HepG2 (cell line): ENCODE measurements at regions of chr18 and their contacts with region 1.

Region 1: GRCh38 chr18:52409727-52410126 is 69.7 kb downstream of the DCC start:
- DNase-seq: peak; percentile 12
- ATAC-seq: peak; percentile 85
- H3K4me3 ChIP-seq: 0 out of 6 replicates have a peak overlapping the region, but pooled peaks of 1 of the 3 experiments have one; percentile 7
- H3K27ac ChIP-seq: no peak overlapping the region
- H3K4me1 ChIP-seq: no peaks in the 10 kb centered on the region
- H3K27me3 ChIP-seq: no peaks in the 10 kb centered on the region
- CTCF ChIP-seq: no peak
- EP300 ChIP-seq: no peak
- POLR2A ChIP-seq: no peak
- RAD21 ChIP-seq: no peak

Region 2: DNA sequence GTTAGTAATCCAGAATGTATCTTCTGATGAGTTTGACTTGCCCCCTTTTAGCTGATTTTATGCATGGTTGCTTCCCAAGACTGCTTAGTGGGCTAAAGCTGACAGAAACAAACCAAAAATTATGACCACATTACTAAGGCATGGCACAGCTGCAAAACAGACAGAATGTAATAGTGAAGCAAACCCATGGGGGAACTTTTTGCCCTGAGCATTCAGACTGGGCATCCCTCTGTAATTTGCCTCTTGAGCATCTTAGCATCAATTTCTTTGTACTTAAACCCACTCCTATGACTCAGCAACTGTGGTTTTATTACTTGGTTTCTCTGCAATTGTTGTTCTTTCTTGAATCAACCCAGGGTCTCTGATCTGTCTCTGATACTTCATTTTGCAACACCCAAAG is 557.0 kb before region 1 on chr18:
- CTCF ChIA-PET with region 1: no interaction called
- POLR2A ChIA-PET with region 1: no interaction called
- in situ Hi-C with region 1: no loop called
- intact Hi-C with region 1: no loop called
- DNase-seq: no peak
- ATAC-seq: no peak
- H3K4me3 ChIP-seq: no peak overlapping the region
- H3K27ac ChIP-seq: no peak overlapping the region
- H3K4me1 ChIP-seq: no peaks in the 10 kb centered on the region
- H3K27me3 ChIP-seq: no peaks in the 10 kb centered on the region
- CTCF ChIP-seq: no peak
- EP300 ChIP-seq: no peak
- POLR2A ChIP-seq: no peak
- RAD21 ChIP-seq: no peak

Region 3: DNA sequence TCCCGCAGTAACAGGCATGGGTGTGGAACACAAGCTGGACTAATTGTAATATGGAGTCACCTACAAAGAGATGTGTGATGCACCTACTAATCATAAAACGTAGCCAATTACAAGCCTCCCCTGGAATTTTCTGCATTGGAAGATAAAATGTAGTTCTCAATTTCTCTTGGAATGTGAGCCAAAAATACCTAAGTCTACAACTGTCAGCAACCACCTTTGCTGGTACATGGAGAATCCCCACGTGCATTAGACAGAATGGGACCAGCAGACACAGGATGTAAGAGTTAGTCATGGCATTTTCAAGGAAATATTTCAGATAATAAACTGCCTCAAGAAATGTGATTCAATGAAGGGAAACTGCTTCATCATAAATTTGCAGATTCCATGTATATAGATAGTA is 155.4 kb before region 1 on chr18:
- CTCF ChIA-PET with region 1: no interaction called
- POLR2A ChIA-PET with region 1: no interaction called
- in situ Hi-C with region 1: no loop called
- intact Hi-C with region 1: no loop called
- DNase-seq: no peak
- ATAC-seq: no peak
- H3K4me3 ChIP-seq: no peak overlapping the region
- H3K27ac ChIP-seq: no peak overlapping the region
- H3K4me1 ChIP-seq: no peaks in the 10 kb centered on the region
- H3K27me3 ChIP-seq: no peaks in the 10 kb centered on the region
- CTCF ChIP-seq: no peak
- EP300 ChIP-seq: no peak
- POLR2A ChIP-seq: no peak
- RAD21 ChIP-seq: no peak

Region 4: DNA sequence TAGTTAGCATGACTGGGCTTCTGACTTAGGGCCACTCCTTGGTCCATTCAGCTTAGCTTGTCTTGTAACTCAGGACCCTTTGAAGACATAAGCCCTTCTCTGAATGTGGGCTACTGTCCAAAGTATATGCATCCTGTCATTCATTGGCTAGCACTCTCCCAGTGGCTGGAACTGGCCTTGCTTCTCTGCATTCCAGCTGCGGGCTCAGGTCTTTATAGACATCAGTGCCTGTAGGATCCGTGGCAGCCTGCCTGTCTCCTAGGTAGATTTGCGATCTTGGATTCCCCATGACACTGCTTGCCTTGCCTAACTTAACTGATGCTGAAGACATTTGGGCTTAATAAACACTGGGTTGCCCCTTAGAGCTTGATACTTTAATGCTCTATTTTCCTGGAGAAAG is 100.4 kb after region 1 on chr18:
- CTCF ChIA-PET with region 1: no interaction called
- POLR2A ChIA-PET with region 1: no interaction called
- in situ Hi-C with region 1: no loop called
- intact Hi-C with region 1: loop called (anchors 5 kb)
- DNase-seq: no peak
- ATAC-seq: no peak
- H3K4me3 ChIP-seq: no peak overlapping the region
- H3K27ac ChIP-seq: no peak overlapping the region
- H3K4me1 ChIP-seq: no peaks in the 10 kb centered on the region
- H3K27me3 ChIP-seq: no peaks in the 10 kb centered on the region
- CTCF ChIP-seq: no peak
- EP300 ChIP-seq: no peak
- POLR2A ChIP-seq: no peak
- RAD21 ChIP-seq: no peak